ENCODE measurements at regions of chr17 and their contacts with region 1.

Region 1: GRCh38 chr17:76816590-76817135 is 51.5 kb upstream of the MGAT5B start:
- DNase-seq: peak; percentile 69 to 74 (median 72)
- ATAC-seq: peak; percentile 91
- H3K4me3 ChIP-seq: no peak overlapping the region
- H3K27ac ChIP-seq: no peak overlapping the region
- H3K4me1 ChIP-seq: peaks cover 4 to 5% of the 10 kb centered on the region in 2 experiments; a peak in 1 of 5 replicates
- H3K27me3 ChIP-seq: peaks cover 8 to 34% of the 10 kb centered on the region in 2 experiments; a peak in 3 of 5 replicates
- CTCF ChIP-seq: peak; percentile 83 to 87 (median 86)
- EP300 ChIP-seq: no peak
- POLR2A ChIP-seq: no peak
- RAD21 ChIP-seq: peak; percentile 48 to 76

Region 2: DNA sequence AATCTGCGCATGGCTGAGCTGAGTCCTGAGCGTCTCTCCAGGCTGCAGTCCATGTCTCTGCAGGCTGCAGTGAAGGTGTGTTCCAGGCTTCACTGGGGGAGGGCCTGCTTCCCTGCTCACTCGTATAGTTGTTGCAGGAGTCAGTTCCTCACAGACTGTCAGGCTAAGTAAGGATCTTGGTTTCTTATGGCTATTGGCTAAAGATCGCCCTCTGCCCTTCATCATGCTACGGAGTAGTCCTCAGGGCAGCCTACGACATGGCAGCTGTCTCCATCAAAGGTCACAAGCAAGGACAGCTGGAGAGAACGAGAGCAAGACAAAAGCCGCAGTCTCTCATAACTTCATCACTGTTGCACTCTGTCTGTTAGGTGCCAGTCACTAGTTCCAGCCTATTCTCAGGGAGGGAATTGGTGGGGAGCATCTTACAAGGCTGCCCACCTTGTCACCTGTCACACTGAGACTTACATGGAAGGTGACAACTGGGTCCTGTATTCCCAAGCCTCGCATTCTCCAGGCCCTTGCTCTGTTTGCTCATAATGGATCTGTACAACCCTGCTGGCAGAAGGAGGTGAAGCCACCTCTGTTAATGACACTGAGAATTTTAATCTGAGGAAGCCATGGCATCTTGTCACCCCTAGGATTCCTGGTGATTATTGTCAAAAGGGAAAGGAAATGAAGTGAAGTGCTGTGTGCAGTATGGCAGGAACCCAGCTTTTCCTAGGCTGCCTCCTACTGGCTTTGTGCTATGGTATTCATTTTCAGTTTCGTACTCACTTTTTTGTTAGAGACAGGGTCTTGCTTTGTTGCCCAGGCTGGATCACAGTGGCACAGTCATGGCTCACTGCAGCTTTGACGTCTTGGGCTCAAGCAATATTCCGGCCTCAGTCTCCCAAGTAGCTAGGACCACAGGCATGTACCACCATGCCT is 35.3 kb before region 1 on chr17:
- CTCF ChIA-PET with region 1: no interaction called
- POLR2A ChIA-PET with region 1: no interaction called
- in situ Hi-C with region 1: no loop called
- intact Hi-C with region 1: no loop called
- DNase-seq: no peak
- ATAC-seq: peak; percentile 55
- H3K4me3 ChIP-seq: no peak overlapping the region
- H3K27ac ChIP-seq: no peak overlapping the region
- H3K4me1 ChIP-seq: no peaks in the 10 kb centered on the region
- H3K27me3 ChIP-seq: no peaks in the 10 kb centered on the region
- CTCF ChIP-seq: peak; percentile 7 to 40 (median 31); a peak in 2 of 6 replicates
- EP300 ChIP-seq: no peak
- POLR2A ChIP-seq: no peak
- RAD21 ChIP-seq: peak in 1 of 2 experiments; percentile 24; a peak in 2 of 4 replicates

Region 3: DNA sequence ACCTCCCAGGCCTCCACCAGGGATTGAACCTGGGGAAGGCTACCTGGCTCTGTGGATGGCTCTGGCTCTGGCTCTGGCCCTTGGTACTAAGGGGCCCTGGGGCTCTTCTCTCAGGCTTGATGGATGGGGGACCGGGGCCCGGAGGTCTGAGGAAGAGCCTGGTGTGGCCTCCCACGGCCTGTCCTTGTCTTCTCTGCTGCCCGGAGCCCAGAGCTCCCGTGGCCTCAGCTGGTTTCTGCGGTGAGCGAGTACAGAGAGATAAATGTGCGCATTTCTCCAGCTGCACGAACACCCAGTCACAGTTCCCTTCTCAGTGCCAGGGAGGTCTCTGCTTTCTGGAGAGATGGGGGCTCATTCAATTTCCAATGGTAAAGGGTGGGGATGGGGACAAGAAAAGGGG is 60.8 kb after region 1 on chr17:
- CTCF ChIA-PET with region 1: no interaction called
- POLR2A ChIA-PET with region 1: no interaction called
- in situ Hi-C with region 1: no loop called
- intact Hi-C with region 1: no loop called
- DNase-seq: no peak
- ATAC-seq: no peak
- H3K4me3 ChIP-seq: no peak overlapping the region
- H3K27ac ChIP-seq: no peak overlapping the region
- H3K4me1 ChIP-seq: peaks cover 0 to 15% of the 10 kb centered on the region in 2 experiments; a peak in 1 of 5 replicates
- H3K27me3 ChIP-seq: peaks cover 24 to 61% of the 10 kb centered on the region in 2 experiments
- CTCF ChIP-seq: no peak
- EP300 ChIP-seq: no peak
- POLR2A ChIP-seq: no peak
- RAD21 ChIP-seq: no peak

Region 4: GRCh38 chr17:76887802-76888201 is 71.1 kb after region 1 on chr17:
- CTCF ChIA-PET with region 1: no interaction called
- POLR2A ChIA-PET with region 1: no interaction called
- in situ Hi-C with region 1: no loop called
- intact Hi-C with region 1: loop called (anchors 5 kb)
- DNase-seq: peak; percentile 36 to 59 (median 39)
- ATAC-seq: peak; percentile 81
- H3K4me3 ChIP-seq: no peak overlapping the region
- H3K27ac ChIP-seq: no peak overlapping the region
- H3K4me1 ChIP-seq: no peaks in the 10 kb centered on the region
- H3K27me3 ChIP-seq: peaks cover 12 to 79% of the 10 kb centered on the region in 2 experiments
- CTCF ChIP-seq: peak; percentile 59 to 68 (median 63)
- EP300 ChIP-seq: no peak
- POLR2A ChIP-seq: no peak
- RAD21 ChIP-seq: peak in 1 of 2 experiments; percentile 43; a peak in 2 of 4 replicates

Measured in K562 (cell line).